Posterior cingulate gyrus (tissue), 11 donors: ENCODE measurements at regions of chr15 and their contacts with region 1.

Region 1: DNA sequence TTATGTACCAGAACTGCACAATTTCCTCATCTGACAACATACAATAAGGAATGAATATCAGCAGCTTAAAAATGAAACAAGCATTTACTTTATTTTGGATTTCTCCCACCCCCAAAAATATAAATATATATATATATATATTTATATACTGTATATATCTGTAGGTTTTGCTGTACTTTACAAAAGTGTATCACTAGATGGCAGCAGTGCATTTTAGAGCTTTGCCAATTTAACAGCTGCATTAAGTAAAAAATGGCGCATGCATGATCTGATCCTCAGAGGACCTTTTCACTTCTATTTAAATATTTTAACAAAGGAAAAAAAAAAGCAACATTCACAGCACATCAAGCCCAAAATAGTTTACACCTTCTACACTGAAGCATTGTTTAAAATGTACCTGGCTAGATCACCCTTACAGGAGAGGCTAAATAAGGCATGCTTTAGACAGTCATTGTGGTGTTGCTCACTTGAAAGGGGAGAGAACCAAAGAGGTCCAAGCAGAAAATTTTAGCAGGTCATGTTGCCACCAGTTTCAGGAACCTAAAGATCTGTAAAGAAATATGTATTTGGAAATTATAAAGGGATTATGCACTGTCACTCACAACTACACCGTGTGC is 72.6 kb downstream of the NPTN start:
- DNase-seq: no peak

Region 2: GRCh38 chr15:73305331-73306211 is 255.0 kb before region 1 on chr15:
- intact Hi-C with region 1: loop called (anchors 2 kb)
- DNase-seq: peak in 5 of 10 donors; percentile 34 to 89 (median 51)

Region 3: GRCh38 chr15:73464602-73465001 is 96.0 kb before region 1 on chr15:
- intact Hi-C with region 1: no loop called
- DNase-seq: no peak

Region 4: DNA sequence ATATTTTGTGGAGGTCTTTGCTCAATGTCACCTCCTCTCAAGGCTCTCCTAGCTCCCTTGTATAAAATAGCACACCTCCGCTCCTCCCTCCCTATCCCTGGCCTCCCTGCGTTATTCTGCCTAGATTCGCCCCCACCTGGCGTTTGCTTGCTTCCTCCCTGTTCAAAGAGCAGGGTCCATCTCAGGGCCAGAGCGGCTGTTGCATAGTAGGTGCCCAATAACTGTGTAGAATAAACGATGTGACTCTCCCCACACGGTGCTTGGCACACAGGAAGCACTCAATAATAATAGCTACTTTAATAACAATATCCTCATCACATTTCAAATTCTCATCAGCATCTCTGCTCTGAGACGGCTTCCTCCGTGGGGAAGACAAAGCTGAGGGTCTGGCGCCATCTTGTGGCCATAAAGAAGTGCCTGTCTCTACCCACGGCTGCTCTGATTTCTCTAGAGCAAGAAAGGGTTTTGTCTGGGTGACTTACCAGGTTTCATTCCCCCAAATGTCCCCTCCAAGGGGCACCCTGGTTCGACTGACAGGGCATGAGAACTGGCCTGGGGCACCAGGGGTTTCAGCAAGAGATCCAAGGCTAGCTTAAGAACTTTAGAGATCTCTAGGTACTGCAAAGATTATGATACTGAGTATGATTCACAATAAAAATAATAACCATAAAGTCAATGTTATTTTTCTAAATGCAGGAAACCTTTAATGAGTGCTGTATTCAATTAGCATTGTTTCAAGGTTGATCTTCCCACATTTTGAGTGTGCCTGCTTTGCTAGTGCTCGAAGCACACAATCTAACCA is 139.6 kb after region 1 on chr15:
- intact Hi-C with region 1: loop called (anchors 1 kb)
- DNase-seq: peak; percentile 61 to 97 (median 84)

Region 5: DNA sequence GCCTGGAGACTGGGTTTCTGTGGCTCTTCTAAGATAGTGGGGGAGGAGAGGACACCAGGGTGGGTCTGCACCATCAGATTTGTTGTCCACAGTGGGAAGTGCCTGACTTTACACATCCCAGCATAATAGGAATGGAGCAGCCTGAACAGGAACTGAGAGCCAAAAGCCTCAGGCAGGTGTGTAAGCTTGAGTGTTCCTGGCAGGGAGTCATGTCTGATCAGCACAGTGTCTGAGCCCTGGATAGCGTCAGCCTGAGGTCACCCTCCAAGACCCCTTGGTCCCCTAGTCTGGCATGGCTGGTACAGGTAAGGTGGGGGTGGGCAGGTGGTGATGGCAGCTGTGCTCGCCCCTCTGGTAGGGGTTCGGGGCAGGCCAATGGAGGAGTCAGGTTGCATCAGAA is 172.3 kb after region 1 on chr15:
- intact Hi-C with region 1: no loop called
- DNase-seq: peak in 1 of 10 donors; percentile 43

Region 6: DNA sequence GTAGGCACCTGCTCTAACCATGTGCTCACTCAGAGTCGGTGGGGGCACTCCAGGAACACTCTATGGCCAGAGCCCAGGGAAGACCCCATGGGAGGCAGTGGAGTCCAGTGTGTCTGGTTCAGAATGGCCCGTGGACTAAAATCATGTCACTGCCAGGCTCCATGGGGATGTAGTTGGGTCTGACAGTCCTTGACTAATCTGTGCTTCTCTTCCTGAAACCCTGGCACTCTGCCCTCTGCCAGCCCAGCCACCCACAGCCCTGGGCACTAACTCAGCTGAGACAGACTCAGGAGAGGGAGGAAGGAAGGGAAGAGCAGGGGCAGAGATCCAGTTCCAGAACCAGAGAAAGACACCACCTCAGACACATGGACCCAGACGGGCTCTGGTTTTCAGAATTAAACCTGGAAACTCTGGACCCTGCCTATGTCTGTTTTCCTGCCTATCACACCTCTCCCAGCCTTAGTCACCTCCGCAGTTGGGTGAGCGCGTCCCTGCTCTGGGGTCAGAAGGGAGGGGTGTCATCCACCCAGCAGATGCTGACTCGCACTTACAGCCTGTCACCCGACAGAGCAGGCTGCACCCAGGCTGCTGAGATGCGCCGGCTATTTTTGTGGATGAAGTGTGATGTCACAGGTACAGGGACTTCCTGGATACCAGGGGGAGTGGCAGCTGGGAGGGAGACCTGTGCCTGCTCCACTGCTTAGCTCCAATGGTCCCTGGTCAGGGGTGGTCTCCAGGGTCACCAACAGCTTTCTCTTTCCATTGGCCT is 249.3 kb after region 1 on chr15:
- intact Hi-C with region 1: no loop called
- DNase-seq: peak in 8 of 10 donors; percentile 55 to 94 (median 70)